BJ (cell line): ENCODE measurements at regions of chr11 and their contacts with region 1.

Region 1: GRCh38 chr11:66592457-66593302 is at the starts of genes CCDC87 and CCS:
- DNase-seq: peak; percentile 62
- H3K4me3 ChIP-seq: peak within 1 kb of the TSS; percentile 68
- H3K27me3 ChIP-seq: no peaks in the 10 kb centered on the region
- CTCF ChIP-seq: peak; percentile 82
- polyA plus RNA-seq, gene CCDC87: 0.12 and 0.15 TPM in 2 replicates
- polyA plus RNA-seq, gene CCS: 23.9 and 36.4 TPM in 2 replicates

Region 2: DNA sequence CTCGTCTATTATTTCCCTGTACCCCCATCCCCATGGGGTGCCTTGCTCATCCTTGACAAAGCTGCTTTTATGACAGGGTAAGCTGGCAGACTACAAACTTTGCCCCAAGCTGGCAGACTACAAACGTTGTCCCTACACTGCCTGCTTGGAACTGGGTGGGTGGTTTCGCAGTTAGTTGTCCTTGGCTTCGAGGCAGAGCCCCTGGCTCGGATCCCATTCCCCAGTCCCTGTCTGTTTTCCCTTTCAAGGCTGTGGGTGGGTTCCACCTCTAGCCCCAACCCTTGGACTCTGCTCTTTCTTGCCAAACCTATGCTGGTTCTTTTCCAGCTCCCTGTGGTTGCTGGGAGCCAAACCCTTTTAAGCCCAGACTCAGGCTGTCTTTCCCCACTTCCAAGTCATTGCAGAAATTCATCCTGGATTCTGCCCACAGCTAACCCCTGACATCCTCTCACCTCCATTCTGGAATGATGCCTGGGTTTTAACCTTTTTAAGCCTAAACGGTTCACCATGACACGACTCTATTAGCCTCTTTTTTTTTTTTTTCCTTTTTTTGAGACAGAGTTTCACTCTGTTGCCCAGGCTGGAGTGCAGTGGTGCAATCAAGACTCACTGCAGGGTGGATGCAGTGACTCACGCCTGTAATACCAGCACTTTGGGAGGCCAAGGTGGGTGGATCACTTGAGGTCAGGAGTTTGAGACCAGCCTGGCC is 14.6 kb after region 1 on chr11:
- CTCF ChIA-PET with region 1: interaction called, 3 read pairs
- POLR2A ChIA-PET with region 1: interaction called, 15 read pairs
- DNase-seq: peak; percentile 12
- H3K4me3 ChIP-seq: no peak overlapping the region
- H3K27me3 ChIP-seq: no peaks in the 10 kb centered on the region
- CTCF ChIP-seq: no peak